ENCODE measurements at regions of chr9 and their contacts with region 1.

Region 1: DNA sequence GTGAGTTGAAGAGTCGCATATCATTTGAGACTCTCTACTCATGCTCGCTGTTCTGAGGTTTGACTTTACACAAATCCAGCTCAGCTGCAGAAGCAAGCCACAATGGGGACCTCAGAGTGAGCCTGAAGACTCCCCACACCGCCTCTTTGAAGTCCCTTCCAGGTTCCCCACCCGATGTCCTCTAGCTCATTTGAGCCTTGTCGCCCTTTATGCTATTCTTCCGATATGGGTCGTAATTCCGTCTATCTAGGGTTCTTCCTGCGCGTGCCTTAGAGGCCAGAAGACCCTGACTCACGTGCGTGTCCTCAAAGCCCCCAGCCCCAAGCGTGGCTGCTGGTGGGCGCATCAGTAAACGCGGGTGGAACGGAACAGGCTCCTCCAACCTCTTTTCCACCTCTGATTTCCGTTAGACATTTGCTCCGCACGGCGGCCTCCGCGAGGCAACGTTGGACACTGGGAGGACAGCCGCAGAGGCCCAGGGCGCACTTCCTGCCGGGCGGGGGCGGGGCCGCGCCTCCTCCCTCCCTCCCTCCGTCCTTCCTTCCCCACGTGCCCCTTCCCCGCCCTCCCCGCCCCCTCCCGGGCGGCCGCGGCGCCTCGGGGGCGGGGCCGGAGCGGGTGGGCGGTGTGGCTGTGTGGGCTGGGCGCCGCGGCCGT is at the start of gene SNX30:
- DNase-seq: peak; percentile 56 to 87 (median 75)
- ATAC-seq: peak; percentile 67 to 73
- H3K4me3 Mint-ChIP-seq: peak within 1 kb of the TSS; percentile 87 to 97 (median 92)
- H3K27ac Mint-ChIP-seq: peak within 1 kb of the TSS; percentile 82 to 98 (median 94)
- H3K4me1 Mint-ChIP-seq: peaks cover 41 to 71% (median 64%) of the 10 kb centered on the region in 4 donors
- H3K27me3 Mint-ChIP-seq: no peaks in the 10 kb centered on the region
- polyA plus RNA-seq, gene SNX30: 1.7 to 3.6 (median 2.2) TPM

Region 2: DNA sequence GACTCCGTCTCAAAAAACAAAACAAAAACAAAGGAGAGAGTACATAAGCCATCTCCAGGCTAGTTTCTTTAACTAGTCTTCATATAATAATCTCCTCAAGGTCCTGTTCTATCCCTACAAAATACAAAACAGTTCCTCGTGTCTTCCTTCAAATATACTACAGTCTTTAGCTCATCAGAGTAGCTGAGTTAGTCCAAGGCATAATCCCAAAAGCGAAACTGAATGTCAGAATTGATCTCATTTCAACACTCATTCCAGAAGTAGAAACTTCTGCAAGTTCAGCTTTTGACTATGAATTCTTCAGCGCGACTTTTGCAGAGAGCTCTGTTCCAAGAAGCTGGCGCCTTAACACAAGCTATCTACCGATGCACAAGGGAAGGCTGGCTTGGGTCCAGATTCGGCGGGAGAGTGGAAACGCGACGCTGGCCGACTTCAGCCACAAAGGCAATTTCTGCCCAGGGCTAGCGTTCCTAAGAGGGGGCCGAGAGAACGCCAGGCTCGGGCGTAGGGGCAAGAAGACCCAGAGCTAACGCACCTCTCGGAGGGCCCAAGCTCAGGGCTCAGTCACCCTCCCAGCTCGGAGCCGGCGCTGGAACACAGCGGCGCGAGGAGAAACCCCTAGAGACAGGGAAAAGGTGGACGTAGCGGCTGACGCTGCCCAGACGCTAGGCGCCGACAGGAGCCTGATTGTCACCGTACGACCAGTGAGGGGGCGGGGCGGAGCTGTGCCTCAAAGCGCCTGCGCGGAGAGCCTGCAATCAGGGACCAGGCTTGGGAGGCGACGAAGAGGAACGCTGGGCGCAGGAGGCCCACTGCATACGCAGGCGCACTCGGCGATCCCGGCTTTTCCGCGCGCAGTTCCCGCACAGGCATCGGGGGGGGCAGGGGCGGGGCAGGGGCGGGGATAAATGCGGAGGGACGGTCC is 370.8 kb before region 1 on chr9:
- POLR2A ChIA-PET with region 1: interaction called, 14 read pairs
- DNase-seq: peak; percentile 92 to 98 (median 95)
- ATAC-seq: peak; percentile 92 to 94
- H3K4me3 Mint-ChIP-seq: peak overlapping the region; percentile 93 to 100 (median 99)
- H3K27ac Mint-ChIP-seq: peak overlapping the region; percentile 95 to 98 (median 98)
- H3K4me1 Mint-ChIP-seq: peaks cover 26 to 67% (median 55%) of the 10 kb centered on the region in 4 donors
- H3K27me3 Mint-ChIP-seq: no peaks in the 10 kb centered on the region

Region 3: DNA sequence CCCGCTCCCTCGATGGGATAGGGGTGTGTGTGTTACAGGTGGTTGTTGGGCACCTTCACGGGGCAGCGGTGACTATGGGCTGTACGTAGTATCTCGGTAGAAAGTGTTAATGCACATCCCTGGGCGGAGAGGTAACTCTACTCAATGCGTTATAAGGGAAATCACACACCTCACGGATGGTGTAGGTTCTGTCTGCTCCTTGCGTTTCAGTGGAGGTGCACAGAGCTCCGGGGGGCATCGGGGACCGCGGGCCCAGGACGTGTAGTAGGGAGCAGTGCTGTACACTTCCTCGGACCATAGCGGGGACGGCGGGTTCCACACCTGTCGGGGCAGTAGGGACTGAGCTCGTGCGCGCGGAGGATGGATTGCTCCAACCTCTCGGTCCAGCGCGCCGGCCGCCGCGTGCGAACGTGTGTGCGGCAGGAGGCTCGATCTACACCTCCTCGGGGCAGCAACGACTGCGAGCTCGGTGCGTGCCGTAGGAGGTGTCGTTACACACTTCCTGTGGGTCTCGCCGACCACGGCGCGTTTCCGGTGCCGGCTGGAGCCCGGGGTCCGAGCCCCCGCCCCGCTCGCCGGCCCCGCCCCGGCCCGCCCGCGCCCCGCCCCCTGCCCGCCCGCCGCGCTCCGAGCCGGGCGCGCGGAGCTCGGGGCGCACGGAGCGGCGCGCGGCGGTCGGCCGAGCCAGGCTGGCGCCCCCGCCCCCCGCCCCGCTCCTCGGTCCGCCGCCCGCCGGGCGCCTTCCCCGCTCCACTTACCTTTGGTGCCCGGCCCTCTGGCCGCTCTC is 263.8 kb before region 1 on chr9 and contains the start of gene KIAA1958:
- POLR2A ChIA-PET with region 1: interaction called, 17 read pairs
- DNase-seq: peak; percentile 69 to 92 (median 76)
- ATAC-seq: peak; percentile 80 to 83
- H3K4me3 Mint-ChIP-seq: peak within 1 kb of the TSS; percentile 92 to 100 (median 99)
- H3K27ac Mint-ChIP-seq: peak within 1 kb of the TSS; percentile 92 to 99 (median 98)
- H3K4me1 Mint-ChIP-seq: peaks cover 10 to 45% (median 38%) of the 10 kb centered on the region in 4 donors
- H3K27me3 Mint-ChIP-seq: no peaks in the 10 kb centered on the region
- polyA plus RNA-seq, gene KIAA1958: 2.6 to 4.3 (median 3.7) TPM

Region 4: GRCh38 chr9:112532427-112532826 is 217.8 kb before region 1 on chr9:
- POLR2A ChIA-PET with region 1: no interaction called
- DNase-seq: no peak
- ATAC-seq: no peak
- H3K4me3 Mint-ChIP-seq: no peak overlapping the region
- H3K27ac Mint-ChIP-seq: no peak overlapping the region
- H3K4me1 Mint-ChIP-seq: peaks cover 11 to 19% (median 13%) of the 10 kb centered on the region in 4 donors
- H3K27me3 Mint-ChIP-seq: no peaks in the 10 kb centered on the region

Region 5: DNA sequence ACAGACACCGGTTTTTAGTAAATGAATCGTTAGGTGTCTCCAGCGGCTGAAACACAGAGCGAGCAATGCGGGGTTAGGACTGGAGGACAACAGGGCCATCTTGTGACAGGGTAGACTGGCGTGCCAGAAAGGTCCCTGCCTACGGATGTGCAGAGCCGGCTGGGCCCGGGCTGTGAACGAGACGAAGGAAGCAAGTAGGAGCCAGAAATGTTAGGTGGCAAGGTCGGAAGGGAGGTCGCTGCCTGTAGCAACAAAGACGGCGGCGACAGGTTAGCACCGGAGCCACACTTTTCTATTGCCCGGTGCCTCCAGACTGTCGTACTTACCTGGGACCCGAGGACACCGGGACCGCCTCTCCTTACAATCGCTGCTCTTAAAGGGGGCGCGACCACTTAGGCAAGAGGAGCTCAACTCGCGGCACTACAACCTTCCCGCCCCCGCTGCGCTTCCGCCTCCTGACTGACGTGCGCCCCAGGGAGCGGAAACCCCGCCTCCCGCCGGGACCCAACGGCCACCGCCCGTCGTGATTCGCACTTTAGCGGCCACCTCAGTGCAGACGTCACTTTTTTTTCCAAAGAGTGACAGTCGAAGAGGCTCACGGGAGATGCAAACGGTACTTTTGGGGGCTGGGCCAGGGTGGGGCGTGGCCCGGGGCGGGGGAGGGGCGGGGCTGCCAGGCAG is 32.4 kb before region 1 on chr9 and contains the start of gene INIP:
- POLR2A ChIA-PET with region 1: interaction called, 18 read pairs
- DNase-seq: peak; percentile 92 to 99 (median 98)
- ATAC-seq: peak; percentile 88 to 89
- H3K4me3 Mint-ChIP-seq: peak within 1 kb of the TSS; percentile 90 to 100 (median 96)
- H3K27ac Mint-ChIP-seq: peak within 1 kb of the TSS; percentile 95 to 99 (median 98)
- H3K4me1 Mint-ChIP-seq: peaks cover 5 to 30% (median 19%) of the 10 kb centered on the region in 4 donors
- H3K27me3 Mint-ChIP-seq: no peaks in the 10 kb centered on the region
- polyA plus RNA-seq, gene INIP: 26.6 to 38.9 (median 38.5) TPM